T-cell (primary cell): ENCODE measurements at regions of chr5 and their contacts with region 1.

Region 1: DNA sequence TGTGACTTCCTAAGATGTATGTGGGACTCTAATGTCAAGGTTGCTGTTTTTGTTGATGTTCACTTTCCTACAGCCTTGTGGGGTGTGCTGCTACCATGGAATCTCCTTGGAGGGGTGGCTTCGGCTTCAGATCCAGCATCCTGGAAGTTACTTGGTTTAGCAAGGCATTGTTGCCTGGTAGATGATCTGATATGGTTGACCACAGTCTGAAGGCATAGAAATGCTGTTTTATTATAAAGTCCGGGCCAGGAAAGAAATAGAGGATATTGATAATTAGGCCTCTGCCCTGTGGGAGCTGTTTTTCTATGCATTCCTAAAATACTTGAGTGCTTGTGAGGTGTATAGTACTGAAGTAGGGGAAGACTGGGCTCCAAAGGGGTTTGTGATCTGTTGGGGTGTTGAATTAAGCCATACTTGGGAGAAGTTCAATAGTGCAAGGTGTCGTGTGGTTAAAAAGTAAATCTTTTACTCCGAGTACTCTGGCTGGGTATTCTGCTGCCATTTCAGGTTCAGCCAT is 27.3 kb upstream of the CREBRF start:
- DNase-seq: no peak
- ATAC-seq: peak in 1 of 4 experiments; percentile 10
- H3K4me3 ChIP-seq: peak overlapping the region in 1 of 2 donors; percentile 32
- H3K4me3 Mint-ChIP-seq: no peak overlapping the region
- H3K27ac ChIP-seq: peak overlapping the region; percentile 25
- H3K27ac Mint-ChIP-seq: no peak overlapping the region
- H3K4me1 ChIP-seq: peaks cover 12 to 21% of the 10 kb centered on the region in 2 experiments
- H3K4me1 Mint-ChIP-seq: peaks cover 7 to 24% (median 16%) of the 10 kb centered on the region in 3 donors
- H3K27me3 ChIP-seq: no peaks in the 10 kb centered on the region
- H3K27me3 Mint-ChIP-seq: no peaks in the 10 kb centered on the region

Region 2: GRCh38 chr5:172953776-172954675 is 74.8 kb before region 1 on chr5:
- CTCF ChIA-PET with region 1: no interaction called
- POLR2A ChIA-PET with region 1: no interaction called
- DNase-seq: no peak
- ATAC-seq: no peak
- H3K4me3 ChIP-seq: no peak overlapping the region
- H3K4me3 Mint-ChIP-seq: no peak overlapping the region
- H3K27ac ChIP-seq: no peak overlapping the region
- H3K27ac Mint-ChIP-seq: no peak overlapping the region
- H3K4me1 ChIP-seq: peaks cover 0 to 6% of the 10 kb centered on the region in 2 experiments
- H3K4me1 Mint-ChIP-seq: peaks cover 6 to 11% (median 10%) of the 10 kb centered on the region in 3 donors
- H3K27me3 ChIP-seq: no peaks in the 10 kb centered on the region
- H3K27me3 Mint-ChIP-seq: no peaks in the 10 kb centered on the region

Region 3: DNA sequence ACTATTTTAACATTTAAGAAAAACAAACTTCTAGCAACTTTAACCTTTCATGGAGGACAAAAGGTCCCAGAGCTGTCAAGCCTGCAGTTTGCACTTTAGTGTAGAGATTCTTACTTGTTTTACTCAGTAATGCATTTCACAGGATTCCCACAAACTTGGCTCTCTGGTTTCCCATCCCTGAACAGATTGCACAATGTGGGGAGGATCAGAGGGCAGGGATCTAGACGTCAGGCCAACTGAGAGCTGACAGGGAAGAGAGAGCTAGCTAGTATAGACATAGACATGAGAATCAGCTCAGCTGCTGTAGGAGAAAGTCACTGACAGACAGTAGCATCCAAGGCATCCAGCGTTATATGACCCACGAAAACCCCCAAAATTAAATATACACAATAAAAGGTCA is 94.5 kb after region 1 on chr5:
- CTCF ChIA-PET with region 1: no interaction called
- POLR2A ChIA-PET with region 1: no interaction called
- DNase-seq: no peak
- ATAC-seq: no peak
- H3K4me3 ChIP-seq: no peak overlapping the region
- H3K4me3 Mint-ChIP-seq: no peak overlapping the region
- H3K27ac ChIP-seq: no peak overlapping the region
- H3K27ac Mint-ChIP-seq: no peak overlapping the region
- H3K4me1 ChIP-seq: no peaks in the 10 kb centered on the region
- H3K4me1 Mint-ChIP-seq: no peaks in the 10 kb centered on the region
- H3K27me3 ChIP-seq: no peaks in the 10 kb centered on the region
- H3K27me3 Mint-ChIP-seq: no peaks in the 10 kb centered on the region

Region 4: GRCh38 chr5:173271419-173271818 is 242.6 kb after region 1 on chr5:
- CTCF ChIA-PET with region 1: no interaction called
- POLR2A ChIA-PET with region 1: no interaction called
- DNase-seq: no peak
- ATAC-seq: no peak
- H3K4me3 ChIP-seq: no peak overlapping the region
- H3K4me3 Mint-ChIP-seq: no peak overlapping the region
- H3K27ac ChIP-seq: no peak overlapping the region
- H3K27ac Mint-ChIP-seq: no peak overlapping the region
- H3K4me1 ChIP-seq: no peaks in the 10 kb centered on the region
- H3K4me1 Mint-ChIP-seq: no peaks in the 10 kb centered on the region
- H3K27me3 ChIP-seq: peaks cover 3 to 30% of the 10 kb centered on the region in 2 experiments
- H3K27me3 Mint-ChIP-seq: peaks cover 29 to 37% of the 10 kb centered on the region in 2 donors

Region 5: DNA sequence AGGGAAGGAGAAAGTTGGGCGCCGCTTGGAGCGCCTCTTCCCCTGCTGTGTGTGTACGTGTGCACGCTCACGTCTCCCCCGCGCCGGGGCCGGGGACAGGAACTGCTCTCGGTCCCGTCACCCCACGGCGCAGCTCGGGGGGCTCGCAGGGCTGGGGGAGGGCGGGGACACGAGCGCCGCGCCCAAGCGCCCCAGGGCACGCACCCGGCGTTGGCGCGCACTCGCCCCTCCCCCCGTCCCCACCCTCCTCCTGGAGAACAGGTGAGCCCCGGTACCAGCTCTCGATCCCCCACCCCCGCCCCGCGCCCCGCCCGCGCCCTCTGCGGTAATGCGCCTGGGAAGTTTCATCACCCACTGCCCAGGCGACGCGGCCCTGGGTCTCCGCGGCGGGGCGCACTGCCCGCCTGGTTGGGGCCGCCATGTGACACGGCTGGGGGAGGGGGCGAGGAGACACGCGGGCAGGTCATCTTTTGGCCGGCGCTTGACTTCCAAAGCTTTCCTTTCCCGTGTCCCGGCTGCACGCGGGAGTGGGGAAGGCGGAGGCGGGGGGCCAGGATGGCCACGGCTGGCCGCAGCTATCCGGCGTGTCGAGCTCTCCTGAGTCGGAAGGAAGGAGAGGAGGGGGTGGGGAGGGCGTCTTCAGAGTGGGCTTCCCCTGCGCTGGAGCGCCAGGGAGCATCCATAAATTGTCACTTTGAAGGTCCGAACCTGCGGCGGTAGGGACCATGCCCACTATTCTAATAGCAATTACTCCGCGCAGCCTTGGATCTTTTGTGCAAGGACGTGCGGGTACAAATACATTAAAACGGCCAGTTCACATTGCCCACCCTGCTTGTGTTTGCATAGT is 300.8 kb after region 1 on chr5:
- CTCF ChIA-PET with region 1: interaction called in 1 of 2 experiments, 10 read pairs
- POLR2A ChIA-PET with region 1: no interaction called
- DNase-seq: no peak
- ATAC-seq: no peak
- H3K4me3 ChIP-seq: no peak overlapping the region
- H3K4me3 Mint-ChIP-seq: peak overlapping the region in 2 of 3 donors; percentile 44 to 62
- H3K27ac ChIP-seq: no peak overlapping the region
- H3K27ac Mint-ChIP-seq: no peak overlapping the region
- H3K4me1 ChIP-seq: peaks cover 0 to 24% of the 10 kb centered on the region in 2 experiments
- H3K4me1 Mint-ChIP-seq: peaks cover 20 to 26% (median 25%) of the 10 kb centered on the region in 3 donors
- H3K27me3 ChIP-seq: peaks cover 13 to 64% of the 10 kb centered on the region in 2 experiments
- H3K27me3 Mint-ChIP-seq: peaks cover 50 to 68% of the 10 kb centered on the region in 2 donors